ENCODE measurements at regions of chr12 and their contacts with region 1.

Region 1: GRCh38 chr12:50979369-50980052 is 27.2 kb downstream of the HIGD1C start:
- DNase-seq: peak; percentile 72
- H3K4me3 Mint-ChIP-seq: peak overlapping the region; percentile 48
- H3K27ac Mint-ChIP-seq: peak overlapping the region; percentile 89
- H3K4me1 Mint-ChIP-seq: peaks cover 26% of the 10 kb centered on the region
- H3K27me3 Mint-ChIP-seq: no peaks in the 10 kb centered on the region

Region 2: GRCh38 chr12:51009056-51009440 is 29.5 kb after region 1 on chr12:
- CTCF ChIA-PET with region 1: no interaction called
- POLR2A ChIA-PET with region 1: no interaction called
- intact Hi-C with region 1: loop called (anchors 1 kb)
- DNase-seq: peak; percentile 74
- H3K4me3 Mint-ChIP-seq: peak overlapping the region; percentile 40
- H3K27ac Mint-ChIP-seq: peak overlapping the region; percentile 59
- H3K4me1 Mint-ChIP-seq: peaks cover 45% of the 10 kb centered on the region
- H3K27me3 Mint-ChIP-seq: no peaks in the 10 kb centered on the region